ENCODE measurements at regions of chr9 and their contacts with region 1.

Region 1: GRCh38 chr9:130276955-130277354 is 11.4 kb downstream of the HMCN2 start:
- DNase-seq: no peak
- ATAC-seq: peak; percentile 55
- H3K4me3 ChIP-seq: no peak overlapping the region
- H3K27ac ChIP-seq: no peak overlapping the region
- H3K4me1 ChIP-seq: no peaks in the 10 kb centered on the region
- H3K27me3 ChIP-seq: no peaks in the 10 kb centered on the region; a peak in 2 of 4 replicates
- CTCF ChIP-seq: no peak
- EP300 ChIP-seq: no peak
- POLR2A ChIP-seq: no peak
- RAD21 ChIP-seq: no peak

Region 2: GRCh38 chr9:129656795-129657390 is 620.1 kb before region 1 on chr9:
- CTCF ChIA-PET with region 1: no interaction called
- POLR2A ChIA-PET with region 1: interaction called, 10 read pairs
- RAD21 ChIA-PET with region 1: no interaction called
- SMC1A ChIA-PET with region 1: no interaction called
- in situ Hi-C with region 1: no loop called
- intact Hi-C with region 1: no loop called
- DNase-seq: no peak
- ATAC-seq: peak; percentile 67
- H3K4me3 ChIP-seq: no peak overlapping the region
- H3K27ac ChIP-seq: no peak overlapping the region
- H3K4me1 ChIP-seq: no peaks in the 10 kb centered on the region
- H3K27me3 ChIP-seq: no peaks in the 10 kb centered on the region; a peak in 1 of 4 replicates
- CTCF ChIP-seq: no peak
- EP300 ChIP-seq: no peak
- POLR2A ChIP-seq: no peak
- RAD21 ChIP-seq: no peak

Region 3: GRCh38 chr9:130343445-130343918 is 66.5 kb after region 1 on chr9:
- CTCF ChIA-PET with region 1: no interaction called
- POLR2A ChIA-PET with region 1: no interaction called
- RAD21 ChIA-PET with region 1: no interaction called
- SMC1A ChIA-PET with region 1: no interaction called
- in situ Hi-C with region 1: no loop called
- intact Hi-C with region 1: no loop called
- DNase-seq: no peak
- ATAC-seq: peak; percentile 44; the same call in 2 of the 3 replicates
- H3K4me3 ChIP-seq: no peak overlapping the region
- H3K27ac ChIP-seq: no peak overlapping the region
- H3K4me1 ChIP-seq: no peaks in the 10 kb centered on the region
- H3K27me3 ChIP-seq: no peaks in the 10 kb centered on the region
- CTCF ChIP-seq: peak; percentile 57 to 78 (median 61)
- EP300 ChIP-seq: no peak
- POLR2A ChIP-seq: no peak
- RAD21 ChIP-seq: peak; percentile 64